ENCODE measurements at regions of chr12 and their contacts with region 1.

Region 1: DNA sequence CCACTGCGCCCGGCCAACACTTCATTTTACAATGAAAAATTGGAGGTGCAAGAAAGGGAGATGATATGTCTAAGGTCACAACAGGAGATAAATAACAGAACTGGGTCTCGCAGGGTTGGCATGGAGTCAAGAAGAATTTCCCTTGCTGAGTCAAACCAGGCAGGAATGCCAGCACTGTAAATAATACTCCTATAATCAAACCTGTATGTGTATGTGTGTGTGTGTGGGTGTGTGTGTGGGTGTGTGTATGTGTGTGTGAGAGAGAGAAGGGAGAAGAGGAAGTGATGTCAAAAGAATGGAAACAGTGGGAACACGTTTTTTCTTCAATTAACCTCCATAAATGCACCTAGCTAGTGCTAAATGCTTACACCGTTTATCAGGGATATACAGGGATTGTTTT is 70.4 kb downstream of the TMEM116 start:
- DNase-seq: peak in 1 of 2 experiments; percentile 36
- H3K4me3 ChIP-seq: no peak overlapping the region
- H3K27ac ChIP-seq: no peak overlapping the region
- H3K4me1 ChIP-seq: no peaks in the 10 kb centered on the region
- H3K27me3 ChIP-seq: no peaks in the 10 kb centered on the region
- CTCF ChIP-seq: no peak

Region 2: GRCh38 chr12:111826316-111826715 is 116.2 kb before region 1 on chr12:
- CTCF ChIA-PET with region 1: interaction called, 11 read pairs
- POLR2A ChIA-PET with region 1: no interaction called
- intact Hi-C with region 1: no loop called
- DNase-seq: no peak
- H3K4me3 ChIP-seq: no peak overlapping the region
- H3K27ac ChIP-seq: no peak overlapping the region
- H3K4me1 ChIP-seq: 0 out of 2 replicates have a peak, but pooled peaks cover 6% of the 10 kb centered on the region
- H3K27me3 ChIP-seq: peaks cover 15% of the 10 kb centered on the region; the same call in 1 of the 2 replicates
- CTCF ChIP-seq: no peak

Region 3: DNA sequence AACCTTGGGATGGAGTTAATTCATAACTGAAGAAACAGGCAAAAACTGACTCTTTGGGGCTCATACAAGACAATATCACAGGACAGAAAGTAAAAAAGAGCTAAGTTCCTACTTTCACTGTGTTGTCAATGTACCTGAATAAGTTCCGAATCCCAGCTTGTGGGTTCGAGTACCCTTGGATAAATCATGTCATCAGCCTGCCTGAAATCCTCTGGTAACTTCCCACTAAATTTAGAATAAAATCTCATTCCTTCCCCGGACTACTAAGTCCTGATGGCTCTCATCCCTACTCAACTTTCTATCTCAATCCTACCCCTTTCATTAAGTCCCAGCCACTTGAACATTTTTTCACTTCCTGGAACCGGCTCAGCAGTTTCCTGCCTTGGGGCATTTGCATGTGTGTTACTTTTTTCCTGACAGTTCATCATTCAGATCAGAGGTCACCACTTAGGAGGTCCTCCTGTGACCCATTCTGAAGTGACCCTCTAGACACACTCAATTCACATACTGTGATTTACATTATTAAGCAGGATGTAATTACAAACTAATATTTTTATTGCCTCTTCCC is 83.3 kb after region 1 on chr12:
- CTCF ChIA-PET with region 1: interaction called, 5 read pairs
- POLR2A ChIA-PET with region 1: no interaction called
- intact Hi-C with region 1: loop called (anchors 5 kb)
- DNase-seq: no peak
- H3K4me3 ChIP-seq: no peak overlapping the region
- H3K27ac ChIP-seq: peak overlapping the region; percentile 20; the same call in 1 of the 2 replicates
- H3K4me1 ChIP-seq: no peaks in the 10 kb centered on the region
- H3K27me3 ChIP-seq: no peaks in the 10 kb centered on the region
- CTCF ChIP-seq: no peak

Region 4: DNA sequence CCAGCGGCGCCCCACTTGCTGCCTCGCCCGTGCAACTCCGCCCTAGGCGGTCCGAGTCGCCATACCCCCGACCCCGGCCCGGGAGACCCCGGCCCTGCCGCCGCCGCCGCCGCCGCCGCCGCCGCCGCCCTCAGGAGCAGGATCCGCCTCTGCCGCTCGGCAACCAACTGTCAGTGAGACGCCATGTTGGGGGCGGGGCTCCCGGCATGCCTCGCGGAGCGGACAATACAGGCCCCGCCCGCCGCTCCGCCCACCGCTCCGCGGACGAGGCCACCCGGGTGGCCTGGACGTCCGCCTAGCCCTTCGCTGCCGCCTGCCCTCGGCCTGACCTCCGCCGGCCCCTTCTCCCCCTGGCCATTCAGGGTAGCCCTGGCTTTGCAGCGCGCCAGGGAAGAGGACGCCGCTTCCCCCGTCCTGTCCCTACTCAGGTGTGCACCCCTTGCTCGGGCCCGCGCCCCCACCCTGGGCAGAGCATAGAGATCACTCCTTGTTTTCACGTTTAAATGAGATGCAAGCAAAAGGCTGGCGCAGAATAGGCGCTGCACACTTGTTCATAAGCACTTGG is 439.8 kb after region 1 on chr12 and contains the start of gene HECTD4:
- CTCF ChIA-PET with region 1: interaction called, 3 read pairs
- POLR2A ChIA-PET with region 1: interaction called, 5 read pairs
- intact Hi-C with region 1: loop called (anchors 1 kb)
- DNase-seq: peak; percentile 75 to 93
- H3K4me3 ChIP-seq: peak within 1 kb of the TSS; percentile 89
- H3K27ac ChIP-seq: no peak within 1 kb of the TSS
- H3K4me1 ChIP-seq: peaks cover 15% of the 10 kb centered on the region
- H3K27me3 ChIP-seq: no peaks in the 10 kb centered on the region
- CTCF ChIP-seq: no peak
- total RNA-seq, gene HECTD4: 37.4 and 39.8 TPM in 2 replicates

Region 5: GRCh38 chr12:112458330-112458729 is 515.8 kb after region 1 on chr12:
- CTCF ChIA-PET with region 1: interaction called, 11 read pairs
- POLR2A ChIA-PET with region 1: no interaction called
- intact Hi-C with region 1: no loop called
- DNase-seq: no peak
- H3K4me3 ChIP-seq: no peak overlapping the region
- H3K27ac ChIP-seq: no peak overlapping the region
- H3K4me1 ChIP-seq: no peaks in the 10 kb centered on the region
- H3K27me3 ChIP-seq: no peaks in the 10 kb centered on the region
- CTCF ChIP-seq: no peak

Measured in PC-9 (cell line).